ENCODE measurements at regions of chr2 and their contacts with region 1.

Region 1: GRCh38 chr2:25521665-25522387 is 151.6 kb downstream of the DTNB start:
- DNase-seq: no peak
- ATAC-seq: peak; percentile 97
- H3K4me3 Mint-ChIP-seq: peak overlapping the region; percentile 7
- H3K27ac Mint-ChIP-seq: peak overlapping the region; percentile 38
- H3K4me1 Mint-ChIP-seq: peaks cover 23% of the 10 kb centered on the region
- H3K27me3 Mint-ChIP-seq: no peaks in the 10 kb centered on the region
- CTCF ChIP-seq: no peak

Region 2: DNA sequence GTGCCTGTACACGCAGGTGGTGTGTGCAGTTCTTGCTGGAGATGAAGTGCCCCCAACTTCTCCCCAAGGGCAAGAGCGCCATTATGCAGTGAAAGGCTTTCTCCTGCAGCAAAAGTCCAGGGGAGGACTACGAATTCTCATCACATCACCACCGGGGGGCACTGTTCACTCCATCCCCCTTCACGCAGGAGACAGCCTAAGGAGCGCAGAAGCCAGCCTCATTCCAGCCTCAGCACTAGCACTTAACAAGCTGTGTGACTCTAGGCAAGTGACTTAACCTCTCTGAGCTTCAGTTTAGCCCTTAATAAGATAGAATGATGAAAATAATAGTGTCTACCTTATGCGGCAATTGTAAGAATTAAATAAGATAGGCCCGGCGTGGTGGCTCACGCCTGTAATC is 212.4 kb before region 1 on chr2:
- CTCF ChIA-PET with region 1: interaction called, 5 read pairs
- POLR2A ChIA-PET with region 1: no interaction called
- intact Hi-C with region 1: loop called (anchors 1 kb)
- DNase-seq: peak; percentile 46
- ATAC-seq: peak; percentile 71
- H3K4me3 Mint-ChIP-seq: no peak overlapping the region
- H3K27ac Mint-ChIP-seq: no peak overlapping the region
- H3K4me1 Mint-ChIP-seq: peaks cover 16% of the 10 kb centered on the region
- H3K27me3 Mint-ChIP-seq: no peaks in the 10 kb centered on the region
- CTCF ChIP-seq: no peak

Region 3: DNA sequence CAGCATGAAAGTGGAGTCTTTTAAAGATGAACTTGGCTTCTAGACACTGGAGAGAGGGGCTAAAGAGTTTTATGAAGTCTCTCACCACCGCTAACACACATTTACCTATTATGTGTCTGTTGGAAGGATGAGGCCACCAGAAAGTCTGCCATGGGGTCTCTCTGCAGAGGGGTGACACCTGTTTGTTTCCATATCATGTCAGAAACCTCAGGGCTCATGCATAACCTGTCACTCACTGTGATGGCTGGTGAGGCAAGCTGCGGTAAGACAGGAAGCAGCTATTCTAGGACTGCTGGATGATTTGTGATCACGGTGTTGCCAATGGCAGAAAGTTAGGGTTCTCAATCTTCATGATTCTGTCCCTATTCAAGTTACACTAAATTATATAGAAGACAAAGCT is 119.3 kb before region 1 on chr2:
- CTCF ChIA-PET with region 1: no interaction called
- POLR2A ChIA-PET with region 1: interaction called, 13 read pairs
- intact Hi-C with region 1: no loop called
- DNase-seq: no peak
- ATAC-seq: peak; percentile 5
- H3K4me3 Mint-ChIP-seq: no peak overlapping the region
- H3K27ac Mint-ChIP-seq: peak overlapping the region; percentile 95
- H3K4me1 Mint-ChIP-seq: peaks cover 88% of the 10 kb centered on the region
- H3K27me3 Mint-ChIP-seq: no peaks in the 10 kb centered on the region
- CTCF ChIP-seq: no peak

Region 4: GRCh38 chr2:25420820-25421237 is 101.0 kb before region 1 on chr2:
- CTCF ChIA-PET with region 1: interaction called, 3 read pairs
- POLR2A ChIA-PET with region 1: interaction called, 13 read pairs
- intact Hi-C with region 1: loop called (anchors 1 kb)
- DNase-seq: no peak
- ATAC-seq: peak; percentile 29
- H3K4me3 Mint-ChIP-seq: peak overlapping the region; percentile 93
- H3K27ac Mint-ChIP-seq: peak overlapping the region; percentile 95
- H3K4me1 Mint-ChIP-seq: peaks cover 97% of the 10 kb centered on the region
- H3K27me3 Mint-ChIP-seq: no peaks in the 10 kb centered on the region
- CTCF ChIP-seq: no peak

Region 5: GRCh38 chr2:25497918-25498407 is 23.9 kb before region 1 on chr2:
- CTCF ChIA-PET with region 1: no interaction called
- POLR2A ChIA-PET with region 1: no interaction called
- intact Hi-C with region 1: no loop called
- DNase-seq: no peak
- ATAC-seq: peak; percentile 78
- H3K4me3 Mint-ChIP-seq: peak overlapping the region; percentile 39
- H3K27ac Mint-ChIP-seq: peak overlapping the region; percentile 83
- H3K4me1 Mint-ChIP-seq: peaks cover 23% of the 10 kb centered on the region
- H3K27me3 Mint-ChIP-seq: no peaks in the 10 kb centered on the region
- CTCF ChIP-seq: no peak

Region 6: GRCh38 chr2:25567406-25567805 is 45.6 kb after region 1 on chr2:
- CTCF ChIA-PET with region 1: no interaction called
- POLR2A ChIA-PET with region 1: interaction called, 3 read pairs
- intact Hi-C with region 1: loop called (anchors 1 kb)
- DNase-seq: no peak
- ATAC-seq: peak; percentile 53
- H3K4me3 Mint-ChIP-seq: no peak overlapping the region
- H3K27ac Mint-ChIP-seq: no peak overlapping the region
- H3K4me1 Mint-ChIP-seq: peaks cover 27% of the 10 kb centered on the region
- H3K27me3 Mint-ChIP-seq: no peaks in the 10 kb centered on the region
- CTCF ChIP-seq: no peak

Region 7: GRCh38 chr2:25582077-25582830 is 60.4 kb after region 1 on chr2:
- CTCF ChIA-PET with region 1: no interaction called
- POLR2A ChIA-PET with region 1: no interaction called
- intact Hi-C with region 1: no loop called
- DNase-seq: no peak
- ATAC-seq: peak; percentile 89
- H3K4me3 Mint-ChIP-seq: peak overlapping the region; percentile 19
- H3K27ac Mint-ChIP-seq: no peak overlapping the region
- H3K4me1 Mint-ChIP-seq: peaks cover 24% of the 10 kb centered on the region
- H3K27me3 Mint-ChIP-seq: no peaks in the 10 kb centered on the region
- CTCF ChIP-seq: no peak

Measured in activated B cell treated with CpG ODN at 0.5 μM for 24 hours (primary cell).